Panc1 (cell line): ENCODE measurements at regions of chr1 and their contacts with region 1.

Region 1: DNA sequence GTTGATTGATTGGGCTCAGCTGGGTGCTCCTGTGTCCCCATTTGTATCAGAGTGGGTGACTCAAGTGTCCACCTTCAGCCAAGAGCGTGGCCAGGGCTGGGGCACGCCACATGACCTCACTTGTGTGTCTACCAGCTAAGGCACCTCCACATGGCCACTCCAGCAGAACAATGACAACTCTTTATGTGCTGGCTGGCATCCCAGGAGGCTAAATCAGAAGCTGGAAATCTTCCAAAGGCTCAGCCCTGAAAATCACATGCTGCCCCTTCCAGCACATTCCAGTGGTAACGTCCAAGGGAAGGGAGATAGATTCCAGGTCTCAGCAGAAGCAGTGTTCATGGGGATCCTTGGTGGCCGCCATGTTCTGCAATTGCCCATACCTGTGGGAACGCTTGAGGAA is 585.5 kb downstream of the AJAP1 start:
- DNase-seq: no peak
- ATAC-seq: no peak
- H3K4me3 ChIP-seq: no peak overlapping the region
- H3K27ac ChIP-seq: no peak overlapping the region
- H3K4me1 ChIP-seq: no peaks in the 10 kb centered on the region
- H3K27me3 ChIP-seq: no peaks in the 10 kb centered on the region
- CTCF ChIP-seq: no peak

Region 2: DNA sequence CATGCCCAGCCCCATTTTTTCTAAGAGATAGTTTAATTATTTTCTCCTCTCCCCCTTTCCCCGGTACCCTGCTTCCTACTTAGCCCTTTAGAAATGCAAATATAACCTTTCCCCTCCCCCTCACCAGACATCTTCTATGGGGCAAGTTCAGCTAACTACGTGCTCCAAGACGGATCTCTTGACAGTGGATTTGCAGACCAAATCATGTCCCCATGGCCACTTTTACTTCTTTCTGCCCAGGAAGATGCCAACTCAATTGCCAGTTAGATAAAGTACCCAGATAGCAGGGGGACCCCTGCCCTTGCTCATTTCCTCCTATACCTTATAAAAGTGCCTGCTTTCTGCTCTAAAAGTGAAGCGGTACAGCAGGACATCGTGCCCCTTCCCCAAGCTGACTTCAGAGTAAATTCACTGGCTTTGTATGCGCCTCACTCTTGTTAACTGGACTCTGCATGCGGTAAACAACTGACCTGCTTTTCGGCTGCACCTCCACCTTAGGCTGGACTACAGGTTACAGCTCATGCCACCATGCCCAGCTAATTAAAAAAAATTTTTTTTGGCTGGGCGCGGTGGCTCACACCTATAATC is 1454.3 kb after region 1 on chr1:
- CTCF ChIA-PET with region 1: no interaction called
- POLR2A ChIA-PET with region 1: interaction called, 11 read pairs
- in situ Hi-C with region 1: no loop called
- intact Hi-C with region 1: no loop called
- DNase-seq: no peak
- ATAC-seq: no peak
- H3K4me3 ChIP-seq: no peak overlapping the region
- H3K27ac ChIP-seq: no peak overlapping the region
- H3K4me1 ChIP-seq: no peaks in the 10 kb centered on the region; the same call in 1 of the 2 replicates
- H3K27me3 ChIP-seq: no peaks in the 10 kb centered on the region
- CTCF ChIP-seq: no peak